ENCODE measurements at regions of chr16 and their contacts with region 1.

Region 1: DNA sequence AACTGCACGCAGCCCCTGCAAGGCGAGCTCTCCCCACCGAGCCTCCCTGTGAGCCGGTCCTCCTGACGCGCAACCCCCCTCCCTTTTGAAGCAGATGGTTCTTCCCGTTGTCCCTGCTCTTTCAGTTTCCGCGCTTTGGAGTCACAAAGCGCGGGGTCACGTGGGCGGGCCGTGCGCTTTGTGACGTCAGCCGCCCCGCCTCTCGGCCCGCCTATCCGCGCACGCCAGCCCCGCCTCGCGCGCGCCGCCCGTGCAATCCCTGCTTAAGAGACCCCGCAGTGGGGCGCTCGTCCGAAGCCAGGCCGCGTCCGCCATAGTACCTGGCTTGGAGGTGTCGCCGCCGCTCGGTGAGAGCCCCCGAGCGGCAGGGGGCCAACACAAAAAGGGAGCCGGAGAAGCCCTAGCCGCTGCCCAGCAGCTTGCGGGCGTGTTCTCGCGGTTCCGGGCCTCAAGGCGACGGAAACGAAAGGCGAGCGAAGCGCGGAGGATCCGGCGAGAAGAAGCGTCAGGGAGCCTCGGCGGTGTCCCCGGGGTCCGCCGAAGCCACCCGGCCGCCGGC is at the start of gene RBBP6:
- DNase-seq: peak; percentile 91 to 95 (median 95)
- H3K4me3 ChIP-seq: peak within 1 kb of the TSS; percentile 70 to 93
- H3K4me3 Mint-ChIP-seq: peak within 1 kb of the TSS; percentile 98 to 100 (median 100)
- H3K27ac ChIP-seq: peak within 1 kb of the TSS; percentile 97
- H3K27ac Mint-ChIP-seq: peak within 1 kb of the TSS; percentile 99 to 100 (median 100)
- H3K4me1 ChIP-seq: peaks cover 34% of the 10 kb centered on the region
- H3K4me1 Mint-ChIP-seq: peaks cover 20 to 49% (median 35%) of the 10 kb centered on the region in 4 donors
- H3K27me3 ChIP-seq: no peaks in the 10 kb centered on the region
- H3K27me3 Mint-ChIP-seq: peaks cover 0 to 1% of the 10 kb centered on the region in 2 donors
- total RNA-seq, gene RBBP6: 92.6 to 102 TPM

Region 2: DNA sequence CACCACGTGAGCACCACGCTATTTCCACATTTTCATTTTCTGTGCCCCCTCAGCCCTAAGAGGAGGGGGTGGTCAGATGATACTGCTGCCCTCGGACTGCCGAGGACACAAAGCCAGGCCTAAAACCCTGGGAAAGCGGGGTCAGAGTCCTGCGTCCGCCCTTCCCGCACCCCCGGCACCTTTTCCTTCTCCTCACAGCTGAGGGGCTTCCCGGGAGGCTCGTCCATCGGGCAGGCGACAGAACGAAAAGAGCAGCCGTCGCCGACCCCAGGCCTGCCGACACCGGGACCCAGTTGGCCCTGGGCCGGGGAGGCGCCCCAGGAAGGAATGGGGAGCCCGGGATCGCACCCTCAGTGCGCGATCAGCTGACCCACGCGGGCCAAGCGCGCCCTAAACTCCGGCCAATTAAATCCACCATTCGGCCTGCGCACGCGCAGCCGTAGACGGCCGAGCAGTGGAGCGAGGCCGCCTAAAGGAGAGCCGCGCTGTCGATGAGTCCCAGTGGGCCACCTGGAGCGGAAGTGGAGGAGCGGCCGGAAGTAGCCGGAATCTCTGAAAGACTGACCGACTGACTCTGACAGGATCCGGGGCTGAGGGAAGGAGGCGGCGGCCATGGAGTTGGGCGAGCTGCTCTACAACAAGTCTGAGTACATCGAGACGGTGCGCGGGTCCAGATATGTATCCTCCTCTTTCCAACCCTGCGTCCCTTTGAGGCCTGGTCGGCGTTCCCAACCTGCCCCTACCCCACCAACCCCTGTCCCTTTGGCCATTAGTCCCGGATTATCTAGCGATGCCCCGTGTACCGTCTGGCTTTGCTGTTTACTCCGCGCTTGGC is 898.2 kb before region 1 on chr16 and contains the starts of genes DCTN5 and PALB2:
- CTCF ChIA-PET with region 1: no interaction called
- POLR2A ChIA-PET with region 1: no interaction called
- intact Hi-C with region 1: loop called (anchors 1 kb)
- DNase-seq: peak; percentile 78 to 86 (median 80)
- H3K4me3 ChIP-seq: peak within 1 kb of the TSS; percentile 82 to 100
- H3K4me3 Mint-ChIP-seq: peak within 1 kb of the TSS; percentile 98 to 100 (median 99)
- H3K27ac ChIP-seq: peak within 1 kb of the TSS; percentile 85
- H3K27ac Mint-ChIP-seq: peak within 1 kb of the TSS; percentile 96 to 99 (median 98)
- H3K4me1 ChIP-seq: peaks cover 20% of the 10 kb centered on the region
- H3K4me1 Mint-ChIP-seq: peaks cover 24 to 49% (median 37%) of the 10 kb centered on the region in 4 donors
- H3K27me3 ChIP-seq: no peaks in the 10 kb centered on the region
- H3K27me3 Mint-ChIP-seq: no peaks in the 10 kb centered on the region
- total RNA-seq, gene DCTN5: 55.8 to 60.2 TPM
- total RNA-seq, gene PALB2: 12.4 to 15.0 TPM

Region 3: GRCh38 chr16:24516900-24517669 is 22.3 kb before region 1 on chr16:
- CTCF ChIA-PET with region 1: interaction called, 14 read pairs
- POLR2A ChIA-PET with region 1: interaction called, 5 read pairs
- intact Hi-C with region 1: loop called (anchors 1 kb)
- DNase-seq: peak; percentile 62 to 69 (median 67)
- H3K4me3 ChIP-seq: no peak overlapping the region
- H3K4me3 Mint-ChIP-seq: peak overlapping the region in 6 of 8 donors; percentile 3 to 55 (median 46)
- H3K27ac ChIP-seq: no peak overlapping the region
- H3K27ac Mint-ChIP-seq: peak overlapping the region in 3 of 7 donors; percentile 14 to 88 (median 71)
- H3K4me1 ChIP-seq: no peaks in the 10 kb centered on the region
- H3K4me1 Mint-ChIP-seq: peaks cover 4 to 6% (median 5%) of the 10 kb centered on the region in 4 donors
- H3K27me3 ChIP-seq: no peaks in the 10 kb centered on the region
- H3K27me3 Mint-ChIP-seq: peaks cover 2 to 3% of the 10 kb centered on the region in 2 donors

Region 4: GRCh38 chr16:24729362-24729984 is 190.1 kb after region 1 on chr16 and contains the start of gene TNRC6A:
- CTCF ChIA-PET with region 1: no interaction called
- POLR2A ChIA-PET with region 1: interaction called, 6 read pairs
- intact Hi-C with region 1: loop called (anchors 1 kb)
- DNase-seq: peak; percentile 74 to 86 (median 79)
- H3K4me3 ChIP-seq: peak within 1 kb of the TSS; percentile 73 to 79
- H3K4me3 Mint-ChIP-seq: peak within 1 kb of the TSS; percentile 94 to 99 (median 98)
- H3K27ac ChIP-seq: peak within 1 kb of the TSS; percentile 89
- H3K27ac Mint-ChIP-seq: peak within 1 kb of the TSS; percentile 96 to 99 (median 98)
- H3K4me1 ChIP-seq: peaks cover 44% of the 10 kb centered on the region
- H3K4me1 Mint-ChIP-seq: peaks cover 31 to 51% (median 42%) of the 10 kb centered on the region in 4 donors
- H3K27me3 ChIP-seq: no peaks in the 10 kb centered on the region
- H3K27me3 Mint-ChIP-seq: peaks cover 0 to 3% of the 10 kb centered on the region in 2 donors
- total RNA-seq, gene TNRC6A: 99.3 to 103 TPM

Region 5: DNA sequence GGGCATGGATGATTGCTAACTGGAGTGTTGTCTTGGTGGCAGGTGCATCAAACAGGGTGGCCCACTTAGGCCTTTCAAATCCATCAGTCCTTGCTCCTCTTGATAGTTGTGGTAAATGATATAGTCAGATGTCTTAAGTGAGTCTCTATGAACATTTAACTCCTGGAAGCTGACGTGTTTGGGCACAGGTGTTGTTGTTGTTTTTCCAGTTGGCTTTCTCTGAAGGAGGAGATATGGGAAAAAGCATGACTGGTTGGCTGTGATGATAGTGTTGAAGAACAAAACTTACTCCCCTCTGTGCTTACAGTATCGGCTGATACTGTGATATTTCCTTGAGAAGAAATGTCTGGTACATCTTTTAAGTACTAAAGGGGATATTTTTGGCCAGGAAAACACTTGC is 208.1 kb after region 1 on chr16:
- CTCF ChIA-PET with region 1: no interaction called
- POLR2A ChIA-PET with region 1: no interaction called
- intact Hi-C with region 1: no loop called
- DNase-seq: no peak
- H3K4me3 ChIP-seq: no peak overlapping the region
- H3K4me3 Mint-ChIP-seq: peak overlapping the region in 4 of 8 donors; percentile 3 to 52 (median 46)
- H3K27ac ChIP-seq: no peak overlapping the region
- H3K27ac Mint-ChIP-seq: peak overlapping the region in 3 of 7 donors; percentile 4 to 88 (median 13)
- H3K4me1 ChIP-seq: peaks cover 91% of the 10 kb centered on the region
- H3K4me1 Mint-ChIP-seq: peaks cover 66 to 92% (median 77%) of the 10 kb centered on the region in 4 donors
- H3K27me3 ChIP-seq: no peaks in the 10 kb centered on the region
- H3K27me3 Mint-ChIP-seq: no peaks in the 10 kb centered on the region

Region 6: GRCh38 chr16:25051406-25052150 is 512.2 kb after region 1 on chr16:
- CTCF ChIA-PET with region 1: no interaction called
- POLR2A ChIA-PET with region 1: no interaction called
- intact Hi-C with region 1: loop called (anchors 1 kb)
- DNase-seq: peak in 1 of 5 donors; percentile 34
- H3K4me3 ChIP-seq: peak overlapping the region in 1 of 2 donors; percentile 4
- H3K4me3 Mint-ChIP-seq: peak overlapping the region; percentile 48 to 91 (median 74)
- H3K27ac ChIP-seq: peak overlapping the region; percentile 37
- H3K27ac Mint-ChIP-seq: peak overlapping the region; percentile 77 to 98 (median 88)
- H3K4me1 ChIP-seq: peaks cover 49% of the 10 kb centered on the region
- H3K4me1 Mint-ChIP-seq: peaks cover 37 to 61% (median 47%) of the 10 kb centered on the region in 4 donors
- H3K27me3 ChIP-seq: no peaks in the 10 kb centered on the region
- H3K27me3 Mint-ChIP-seq: no peaks in the 10 kb centered on the region

Region 7: GRCh38 chr16:25257504-25257955 is 718.2 kb after region 1 on chr16 and contains the start of gene ZKSCAN2:
- CTCF ChIA-PET with region 1: no interaction called
- POLR2A ChIA-PET with region 1: no interaction called
- intact Hi-C with region 1: loop called (anchors 2 kb)
- DNase-seq: peak; percentile 76 to 83 (median 80)
- H3K4me3 ChIP-seq: peak within 1 kb of the TSS; percentile 80 to 84
- H3K4me3 Mint-ChIP-seq: peak within 1 kb of the TSS; percentile 93 to 98 (median 96)
- H3K27ac ChIP-seq: peak within 1 kb of the TSS; percentile 84
- H3K27ac Mint-ChIP-seq: peak within 1 kb of the TSS; percentile 96 to 98 (median 97)
- H3K4me1 ChIP-seq: peaks cover 44% of the 10 kb centered on the region
- H3K4me1 Mint-ChIP-seq: peaks cover 41 to 68% (median 55%) of the 10 kb centered on the region in 4 donors
- H3K27me3 ChIP-seq: no peaks in the 10 kb centered on the region
- H3K27me3 Mint-ChIP-seq: no peaks in the 10 kb centered on the region
- total RNA-seq, gene ZKSCAN2: 3.6 to 4.1 TPM

Measured in CD4-positive, alpha-beta memory T cell (primary cell).